Head of caudate nucleus (tissue), 42 donors: ENCODE measurements at regions of chr6 and their contacts with region 1.

Region 1: GRCh38 chr6:113909234-113909856 is 52.2 kb downstream of the MARCKS start:
- DNase-seq: peak in 7 of 42 donors; percentile 10 to 58 (median 32)

Region 2: DNA sequence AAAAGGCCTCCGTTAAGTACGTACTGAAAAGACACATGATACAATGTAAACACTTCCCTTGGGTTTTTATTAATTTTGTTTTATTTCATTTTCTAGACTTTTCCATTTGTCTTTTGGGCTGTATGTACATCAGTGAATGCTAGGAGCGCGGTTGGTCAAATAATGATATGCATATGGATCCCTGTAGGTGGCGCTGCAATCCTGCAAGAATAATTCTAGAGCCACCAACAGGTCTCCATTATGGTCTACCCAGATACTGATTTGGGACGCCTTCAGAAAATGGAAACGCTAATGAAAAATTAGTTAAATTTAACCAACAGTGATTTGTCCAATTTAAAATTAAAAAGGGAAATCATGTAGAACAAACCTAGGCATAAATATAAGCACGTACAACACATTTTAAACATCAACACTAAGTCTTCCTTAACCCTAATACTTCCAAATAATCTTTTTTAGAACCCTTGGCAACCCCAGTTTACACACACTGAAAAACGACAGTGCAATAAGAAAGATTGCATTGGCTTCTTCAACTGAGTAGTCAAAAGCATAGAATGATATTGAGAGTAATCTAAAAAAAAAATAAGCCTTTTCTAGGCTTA is 1128.7 kb before region 1 on chr6:
- intact Hi-C with region 1: loop called (anchors 10 kb)
- DNase-seq: peak; percentile 21 to 91 (median 78)

Region 3: DNA sequence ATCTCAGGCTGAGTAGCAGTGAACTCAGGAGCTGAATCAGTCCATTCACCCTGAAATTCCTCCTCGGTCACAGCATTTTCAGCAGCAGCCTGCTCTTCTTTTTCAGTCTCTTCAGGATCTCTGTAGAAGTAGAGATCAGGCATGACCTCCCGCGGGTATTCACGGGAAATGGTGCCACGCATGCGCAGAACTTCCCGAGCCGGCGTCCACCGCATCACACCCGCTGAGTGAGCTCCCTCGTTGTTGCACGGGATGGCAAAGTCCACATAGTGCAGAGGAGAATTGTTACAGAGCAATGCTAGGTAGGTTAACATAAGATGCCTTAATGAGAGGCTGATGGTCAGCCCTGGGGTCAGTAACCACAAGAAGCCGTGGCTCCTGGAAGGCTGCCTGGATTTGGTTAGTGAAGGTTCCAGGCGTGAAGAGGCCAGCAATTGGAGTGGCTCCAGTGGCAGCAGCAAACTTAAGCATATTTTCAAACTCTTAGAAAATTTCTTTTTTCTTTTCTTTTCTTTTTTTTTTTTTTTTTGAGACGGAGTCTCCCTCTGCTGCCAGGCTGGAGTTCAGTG is 175.1 kb after region 1 on chr6:
- intact Hi-C with region 1: no loop called
- DNase-seq: peak in 1 of 42 donors; percentile 42